GM12878 (cell line): ENCODE measurements at regions of chr2 and their contacts with region 1.

Region 1: GRCh38 chr2:11863513-11864328 is 117.3 kb downstream of the LPIN1 start:
- DNase-seq: no peak
- ATAC-seq: peak; percentile 45
- H3K4me3 ChIP-seq: peak overlapping the region; percentile 35; the same call in 1 of the 2 replicates
- H3K27ac ChIP-seq: peak overlapping the region; percentile 85
- H3K4me1 ChIP-seq: peaks cover 65% of the 10 kb centered on the region
- H3K27me3 ChIP-seq: no peaks in the 10 kb centered on the region
- CTCF ChIP-seq: peak; percentile 93 to 97 (median 94)
- EP300 ChIP-seq: no peak
- POLR2A ChIP-seq: no peak
- RAD21 ChIP-seq: peak; percentile 81

Region 2: GRCh38 chr2:11370377-11371091 is 493.2 kb before region 1 on chr2:
- CTCF ChIA-PET with region 1: no interaction called
- POLR2A ChIA-PET with region 1: no interaction called
- RAD21 ChIA-PET with region 1: no interaction called
- SMC1A ChIA-PET with region 1: no interaction called
- in situ Hi-C with region 1: no loop called
- intact Hi-C with region 1: no loop called
- DNase-seq: no peak
- ATAC-seq: no peak
- H3K4me3 ChIP-seq: no peak overlapping the region
- H3K27ac ChIP-seq: no peak overlapping the region
- H3K4me1 ChIP-seq: peaks cover 21% of the 10 kb centered on the region
- H3K27me3 ChIP-seq: no peaks in the 10 kb centered on the region
- CTCF ChIP-seq: no peak
- EP300 ChIP-seq: no peak
- POLR2A ChIP-seq: no peak
- RAD21 ChIP-seq: no peak

Region 3: GRCh38 chr2:11753886-11754699 is 109.6 kb before region 1 on chr2:
- CTCF ChIA-PET with region 1: interaction called, 3 read pairs
- POLR2A ChIA-PET with region 1: interaction called, 6 read pairs
- RAD21 ChIA-PET with region 1: interaction called, 7 read pairs
- SMC1A ChIA-PET with region 1: interaction called, 7 read pairs
- in situ Hi-C with region 1: no loop called
- intact Hi-C with region 1: loop called (anchors 5 kb)
- DNase-seq: peak; percentile 48
- ATAC-seq: peak; percentile 38
- H3K4me3 ChIP-seq: peak overlapping the region; percentile 66
- H3K27ac ChIP-seq: peak overlapping the region; percentile 97
- H3K4me1 ChIP-seq: peaks cover 59% of the 10 kb centered on the region
- H3K27me3 ChIP-seq: no peaks in the 10 kb centered on the region
- CTCF ChIP-seq: no peak
- EP300 ChIP-seq: no peak
- POLR2A ChIP-seq: peak; percentile 60; the same call in 1 of the 2 replicates
- RAD21 ChIP-seq: no peak

Region 4: DNA sequence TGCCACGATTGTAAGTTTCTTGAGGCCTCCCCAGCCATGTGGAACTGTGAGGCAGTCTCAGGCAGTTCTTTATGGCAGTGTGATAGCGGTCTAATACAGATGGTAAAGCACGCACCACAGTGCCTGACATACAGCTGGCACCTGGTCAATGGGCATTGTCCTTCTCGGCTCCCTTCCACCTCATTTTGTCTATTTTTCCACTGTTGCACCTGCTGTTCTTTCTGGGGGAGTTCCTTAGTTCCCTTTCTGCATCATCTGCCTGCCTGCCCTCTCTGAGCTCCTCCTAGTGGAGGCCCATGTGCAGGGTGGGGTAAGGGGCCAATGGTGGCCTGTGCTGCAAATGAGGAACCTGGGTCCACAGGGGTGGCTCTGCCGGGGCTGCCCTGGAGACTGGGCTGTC is 40.3 kb after region 1 on chr2:
- CTCF ChIA-PET with region 1: interaction called, 11 read pairs
- POLR2A ChIA-PET with region 1: interaction called, 4 read pairs
- RAD21 ChIA-PET with region 1: interaction called, 19 read pairs
- SMC1A ChIA-PET with region 1: interaction called, 20 read pairs
- in situ Hi-C with region 1: no loop called
- intact Hi-C with region 1: no loop called
- DNase-seq: no peak
- ATAC-seq: peak; percentile 87
- H3K4me3 ChIP-seq: no peak overlapping the region
- H3K27ac ChIP-seq: no peak overlapping the region
- H3K4me1 ChIP-seq: no peaks in the 10 kb centered on the region
- H3K27me3 ChIP-seq: no peaks in the 10 kb centered on the region
- CTCF ChIP-seq: peak; percentile 17 to 47 (median 27); a peak in 3 of 6 replicates
- EP300 ChIP-seq: no peak
- POLR2A ChIP-seq: no peak
- RAD21 ChIP-seq: peak; percentile 53

Region 5: DNA sequence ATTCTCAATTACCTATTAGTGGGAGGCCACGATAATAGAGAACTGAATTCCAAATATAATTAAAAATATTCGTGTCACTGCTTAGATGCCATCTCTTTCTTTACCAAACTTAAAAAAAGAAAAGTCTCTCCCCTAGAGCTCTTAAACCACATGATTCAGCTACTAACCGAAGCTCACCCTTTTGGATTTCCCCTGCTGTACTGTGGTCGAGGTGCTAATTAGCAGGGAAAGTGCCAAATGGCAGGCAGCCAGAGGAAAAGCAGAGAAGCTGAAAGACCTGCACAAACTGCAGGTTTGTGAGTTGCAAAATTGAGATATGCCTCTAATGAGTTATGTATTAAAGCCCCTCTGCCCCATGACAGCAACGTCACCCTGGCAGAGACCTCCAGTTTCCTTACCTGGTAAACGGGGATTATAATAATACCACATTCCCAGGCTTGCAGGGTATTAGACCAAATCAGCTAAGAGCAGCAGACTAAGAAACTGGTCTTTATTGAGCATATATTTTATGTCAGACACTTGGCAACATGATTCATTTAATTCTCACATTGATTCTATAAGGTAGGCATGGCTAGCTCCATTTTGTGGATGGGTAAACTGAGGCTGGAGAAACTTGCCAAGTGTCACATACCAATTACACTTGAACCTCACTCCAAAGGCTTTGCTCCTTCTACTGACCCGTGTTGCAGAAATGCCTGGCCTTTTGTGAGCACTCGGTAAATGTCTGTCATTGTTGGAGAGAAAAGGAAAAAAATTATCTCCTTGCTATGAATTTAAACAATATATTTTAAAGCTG is 142.4 kb after region 1 on chr2:
- CTCF ChIA-PET with region 1: interaction called, 24 read pairs
- POLR2A ChIA-PET with region 1: interaction called, 26 read pairs
- RAD21 ChIA-PET with region 1: interaction called, 66 read pairs
- SMC1A ChIA-PET with region 1: interaction called, 68 read pairs
- in situ Hi-C with region 1: no loop called
- intact Hi-C with region 1: loop called (anchors 2 kb)
- DNase-seq: peak; percentile 89
- ATAC-seq: peak; percentile 84
- H3K4me3 ChIP-seq: no peak overlapping the region
- H3K27ac ChIP-seq: peak overlapping the region; percentile 71; the same call in 1 of the 2 replicates
- H3K4me1 ChIP-seq: peaks cover 61% of the 10 kb centered on the region
- H3K27me3 ChIP-seq: no peaks in the 10 kb centered on the region
- CTCF ChIP-seq: no peak
- EP300 ChIP-seq: peak; percentile 93 to 95
- POLR2A ChIP-seq: no peak
- RAD21 ChIP-seq: no peak

Region 6: GRCh38 chr2:12071318-12071717 is 207.6 kb after region 1 on chr2:
- CTCF ChIA-PET with region 1: interaction called, 4 read pairs
- POLR2A ChIA-PET with region 1: no interaction called
- RAD21 ChIA-PET with region 1: interaction called, 9 read pairs
- SMC1A ChIA-PET with region 1: interaction called, 10 read pairs
- in situ Hi-C with region 1: no loop called
- intact Hi-C with region 1: loop called (anchors 5 kb)
- DNase-seq: no peak
- ATAC-seq: peak; percentile 49
- H3K4me3 ChIP-seq: no peak overlapping the region
- H3K27ac ChIP-seq: no peak overlapping the region
- H3K4me1 ChIP-seq: peaks cover 31% of the 10 kb centered on the region
- H3K27me3 ChIP-seq: no peaks in the 10 kb centered on the region
- CTCF ChIP-seq: no peak
- EP300 ChIP-seq: peak; percentile 69 to 83; a peak in 3 of 4 replicates
- POLR2A ChIP-seq: no peak
- RAD21 ChIP-seq: no peak

Region 7: DNA sequence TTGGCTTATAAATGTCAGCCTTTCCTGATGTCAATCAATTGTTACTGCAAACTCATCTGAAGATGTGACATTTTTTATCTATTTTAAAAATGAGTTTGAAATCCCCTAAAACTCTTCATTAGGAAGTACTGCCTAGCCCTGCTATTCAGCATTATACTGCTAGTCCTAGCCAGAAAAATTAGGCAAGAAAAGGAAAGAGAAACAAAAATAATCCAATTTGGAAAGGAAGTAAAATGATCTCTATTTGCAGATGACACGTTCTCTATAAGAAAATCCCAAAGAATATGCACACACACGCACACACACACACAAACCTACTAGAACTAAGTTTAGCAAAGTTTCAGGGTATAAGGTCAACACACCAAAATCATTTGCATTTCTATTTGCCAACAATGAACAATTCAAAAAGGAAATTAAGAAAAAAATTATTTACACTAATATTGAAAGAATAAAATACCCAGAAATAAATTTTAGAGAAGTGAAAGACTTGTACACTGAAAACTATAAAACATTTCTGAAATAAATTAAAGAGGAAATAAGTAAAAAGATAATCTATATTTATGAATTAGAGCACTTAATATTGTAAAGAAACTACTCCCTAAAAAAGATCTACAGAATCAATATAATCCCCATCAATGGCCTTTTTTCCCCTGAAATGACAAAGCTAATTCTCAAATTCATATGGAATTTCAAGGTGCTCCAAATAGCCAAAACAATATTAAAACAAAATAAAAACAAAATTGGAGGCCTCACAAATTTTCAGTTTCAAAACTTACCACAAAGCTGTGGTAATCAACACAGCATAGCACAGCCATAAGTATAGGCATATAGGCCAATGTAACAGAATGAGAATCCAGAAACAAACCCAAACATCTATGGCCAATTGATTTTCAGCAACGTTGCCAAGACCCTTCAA is 419.3 kb after region 1 on chr2:
- CTCF ChIA-PET with region 1: no interaction called
- POLR2A ChIA-PET with region 1: no interaction called
- RAD21 ChIA-PET with region 1: no interaction called
- SMC1A ChIA-PET with region 1: no interaction called
- in situ Hi-C with region 1: no loop called
- intact Hi-C with region 1: loop called (anchors 10 kb)
- DNase-seq: no peak
- ATAC-seq: peak; percentile 95
- H3K4me3 ChIP-seq: 0 out of 2 replicates have a peak overlapping the region, but pooled peaks have one; percentile 22
- H3K27ac ChIP-seq: no peak overlapping the region; the same call in 1 of the 2 replicates
- H3K4me1 ChIP-seq: peaks cover 16% of the 10 kb centered on the region
- H3K27me3 ChIP-seq: no peaks in the 10 kb centered on the region
- CTCF ChIP-seq: no peak
- EP300 ChIP-seq: peak in 1 of 2 experiments; percentile 46; a peak in 1 of 4 replicates
- POLR2A ChIP-seq: no peak
- RAD21 ChIP-seq: no peak

Region 8: GRCh38 chr2:12716282-12717190 is 852.8 kb after region 1 on chr2 and contains the start of gene TRIB2:
- CTCF ChIA-PET with region 1: interaction called, 61 read pairs
- POLR2A ChIA-PET with region 1: no interaction called
- RAD21 ChIA-PET with region 1: interaction called, 29 read pairs
- SMC1A ChIA-PET with region 1: interaction called, 6 read pairs
- in situ Hi-C with region 1: no loop called
- intact Hi-C with region 1: loop called (anchors 2 kb)
- DNase-seq: no peak
- ATAC-seq: peak; percentile 85
- H3K4me3 ChIP-seq: peak within 1 kb of the TSS; percentile 87
- H3K27ac ChIP-seq: no peak within 1 kb of the TSS
- H3K4me1 ChIP-seq: peaks cover 3% of the 10 kb centered on the region; the same call in 1 of the 2 replicates
- H3K27me3 ChIP-seq: peaks cover 0 to 18% of the 10 kb centered on the region in 2 experiments; a peak in 3 of 4 replicates
- CTCF ChIP-seq: peak in 2 of 3 experiments; percentile 12 to 35; a peak in 2 of 6 replicates
- EP300 ChIP-seq: no peak
- POLR2A ChIP-seq: peak; percentile 54
- RAD21 ChIP-seq: 0 out of 2 replicates have a peak, but pooled peaks have one; percentile 34
- polyA plus RNA-seq, gene TRIB2: 1.6 to 3.5 TPM